ENCODE measurements at regions of chr7 and their contacts with region 1.

Region 1: DNA sequence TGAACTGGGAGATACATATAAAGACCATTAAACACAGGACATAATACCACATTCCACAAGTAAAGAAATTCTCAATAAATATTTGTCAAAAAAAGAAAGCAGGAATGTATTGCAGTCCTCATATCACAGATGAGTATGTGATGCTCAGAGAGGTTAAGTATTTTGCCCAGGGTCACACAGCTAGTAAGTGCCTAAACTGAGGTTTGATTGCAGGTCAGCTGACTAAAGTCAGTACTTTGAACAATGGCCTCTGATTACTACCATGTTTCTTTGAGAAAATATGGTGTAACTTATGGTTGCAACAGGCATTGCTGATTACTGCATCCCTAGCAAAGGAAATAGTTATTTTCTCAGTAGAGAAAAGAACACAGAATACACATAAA is 267.1 kb downstream of the ELMO1 start:
- DNase-seq: no peak
- H3K4me3 ChIP-seq: no peak overlapping the region
- H3K4me3 Mint-ChIP-seq: no peak overlapping the region
- H3K27ac ChIP-seq: no peak overlapping the region
- H3K27ac Mint-ChIP-seq: no peak overlapping the region
- H3K4me1 ChIP-seq: peaks cover 0 to 5% of the 10 kb centered on the region in 2 donors
- H3K4me1 Mint-ChIP-seq: no peaks in the 10 kb centered on the region
- H3K27me3 ChIP-seq: no peaks in the 10 kb centered on the region
- H3K27me3 Mint-ChIP-seq: no peaks in the 10 kb centered on the region
- CTCF ChIP-seq: no peak

Region 2: DNA sequence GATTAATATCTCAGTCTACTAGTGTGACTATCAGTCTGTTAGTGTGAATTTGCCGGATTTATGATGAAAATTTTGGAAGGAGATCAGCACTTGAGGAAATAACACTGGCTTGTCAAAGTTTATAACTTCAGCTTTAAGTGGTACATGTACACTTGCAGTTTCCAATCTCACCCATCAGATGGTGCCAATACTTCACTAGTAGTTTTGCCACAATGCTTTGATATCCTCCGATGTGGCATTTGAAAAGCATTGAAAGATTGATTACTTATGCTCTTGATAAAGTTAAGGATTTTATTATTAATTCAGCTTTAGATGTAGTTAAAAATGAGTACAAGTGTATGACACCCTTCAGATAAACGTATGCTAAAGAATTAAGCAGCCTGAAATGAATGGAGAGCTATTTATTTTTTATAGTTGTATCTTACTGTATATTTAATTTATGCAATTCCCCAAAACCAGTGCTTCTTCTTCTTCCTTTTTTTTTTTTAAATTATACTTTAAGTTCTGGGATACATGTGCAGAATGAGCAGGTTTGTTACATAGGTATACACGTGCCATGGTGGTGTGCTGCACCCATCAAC is 693.7 kb before region 1 on chr7:
- intact Hi-C with region 1: loop called (anchors 5 kb)
- DNase-seq: peak; percentile 12 to 38 (median 24)
- H3K4me3 ChIP-seq: no peak overlapping the region
- H3K4me3 Mint-ChIP-seq: no peak overlapping the region
- H3K27ac ChIP-seq: no peak overlapping the region
- H3K27ac Mint-ChIP-seq: no peak overlapping the region
- H3K4me1 ChIP-seq: no peaks in the 10 kb centered on the region
- H3K4me1 Mint-ChIP-seq: no peaks in the 10 kb centered on the region
- H3K27me3 ChIP-seq: no peaks in the 10 kb centered on the region
- H3K27me3 Mint-ChIP-seq: no peaks in the 10 kb centered on the region
- CTCF ChIP-seq: peak; percentile 52

Region 3: DNA sequence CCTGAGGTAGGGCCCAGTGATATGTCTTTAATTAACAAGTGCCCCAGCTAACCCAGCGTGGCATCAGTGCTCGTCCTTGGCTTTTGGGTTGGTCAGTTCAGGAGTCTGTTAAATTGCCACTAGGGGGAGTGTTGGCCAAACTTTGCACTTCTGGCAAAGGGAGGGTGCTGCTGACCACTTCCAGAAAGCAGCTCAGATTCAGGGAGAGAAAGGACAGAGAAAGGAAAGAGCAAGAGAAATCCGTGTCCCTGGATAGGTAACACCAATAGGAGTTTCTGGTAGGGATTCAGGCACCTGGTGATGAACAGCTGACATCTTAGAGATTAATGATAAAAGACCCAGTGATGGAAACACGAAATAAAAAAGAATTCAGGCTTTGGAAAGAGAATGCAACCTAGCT is 214.2 kb before region 1 on chr7:
- intact Hi-C with region 1: loop called in 1 of 2 experiments (anchors 10 kb)
- DNase-seq: peak; percentile 50 to 64 (median 62)
- H3K4me3 ChIP-seq: no peak overlapping the region
- H3K4me3 Mint-ChIP-seq: no peak overlapping the region
- H3K27ac ChIP-seq: no peak overlapping the region
- H3K27ac Mint-ChIP-seq: peak overlapping the region in 2 of 7 donors; percentile 34 to 63
- H3K4me1 ChIP-seq: peaks cover 38 to 50% of the 10 kb centered on the region in 2 donors
- H3K4me1 Mint-ChIP-seq: peaks cover 41% of the 10 kb centered on the region
- H3K27me3 ChIP-seq: no peaks in the 10 kb centered on the region
- H3K27me3 Mint-ChIP-seq: no peaks in the 10 kb centered on the region
- CTCF ChIP-seq: peak; percentile 92

Region 4: DNA sequence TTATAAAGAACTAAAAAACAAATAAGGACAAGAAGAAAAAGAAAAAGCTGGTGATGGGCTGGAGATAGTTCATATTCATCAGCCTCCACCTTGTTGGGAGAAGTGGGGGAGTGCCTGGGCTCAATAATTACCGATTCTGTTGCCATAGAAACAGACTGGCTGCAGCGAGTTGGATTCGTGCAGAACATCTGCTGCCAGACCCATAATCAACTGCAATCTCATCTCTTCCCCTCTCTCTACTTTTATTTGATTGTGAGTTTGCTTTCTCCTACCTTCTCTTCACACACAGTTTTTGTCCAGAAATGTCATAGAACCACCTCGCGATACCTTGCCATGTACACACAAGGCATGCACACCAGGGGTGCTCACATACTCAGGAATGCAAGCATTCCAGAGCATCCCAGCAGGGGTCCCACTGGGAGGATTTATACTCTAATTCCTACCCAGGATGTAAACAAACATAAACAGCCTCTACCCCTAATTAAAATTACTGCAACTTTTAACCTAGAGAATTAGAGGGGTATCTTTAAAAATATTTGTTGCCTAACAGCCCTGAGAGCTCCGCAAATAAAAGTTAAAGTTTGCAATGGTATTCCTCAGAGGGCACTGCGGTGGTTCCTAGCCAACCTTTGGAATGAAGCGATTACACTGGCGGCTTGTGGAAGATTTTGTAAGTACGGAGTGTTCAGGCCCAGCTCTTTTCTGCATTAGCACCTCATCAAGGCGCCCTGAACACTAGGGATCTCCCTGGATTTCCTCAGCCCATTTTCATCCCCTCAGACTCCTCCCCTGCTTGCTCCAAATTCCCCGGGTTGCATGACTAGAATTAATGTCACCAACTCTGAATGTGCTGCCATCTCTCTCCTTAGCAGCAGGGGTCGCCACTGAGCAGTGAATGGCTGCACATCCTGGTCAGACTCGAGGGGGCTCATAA is 194.8 kb before region 1 on chr7:
- intact Hi-C with region 1: loop called in 1 of 2 experiments (anchors 5 kb)
- DNase-seq: peak; percentile 33 to 83 (median 36)
- H3K4me3 ChIP-seq: no peak overlapping the region
- H3K4me3 Mint-ChIP-seq: no peak overlapping the region
- H3K27ac ChIP-seq: no peak overlapping the region
- H3K27ac Mint-ChIP-seq: no peak overlapping the region
- H3K4me1 ChIP-seq: peaks cover 20% of the 10 kb centered on the region in 2 donors
- H3K4me1 Mint-ChIP-seq: peaks cover 30% of the 10 kb centered on the region
- H3K27me3 ChIP-seq: no peaks in the 10 kb centered on the region
- H3K27me3 Mint-ChIP-seq: no peaks in the 10 kb centered on the region
- CTCF ChIP-seq: peak; percentile 93